Naive thymus-derived CD4-positive, alpha-beta T cell (primary cell): ENCODE measurements at regions of chr2 and their contacts with region 1.

Region 1: GRCh38 chr2:188631037-188631809 is 339.5 kb downstream of the GULP1 start:
- DNase-seq: no peak
- ATAC-seq: no peak
- H3K4me3 ChIP-seq: no peak overlapping the region
- H3K4me3 Mint-ChIP-seq: no peak overlapping the region
- H3K27ac ChIP-seq: no peak overlapping the region
- H3K27ac Mint-ChIP-seq: no peak overlapping the region
- H3K4me1 ChIP-seq: no peaks in the 10 kb centered on the region
- H3K4me1 Mint-ChIP-seq: no peaks in the 10 kb centered on the region
- H3K27me3 ChIP-seq: no peaks in the 10 kb centered on the region
- H3K27me3 Mint-ChIP-seq: no peaks in the 10 kb centered on the region

Region 2: GRCh38 chr2:188620916-188621315 is 10.3 kb before region 1 on chr2:
- CTCF ChIA-PET with region 1: no interaction called
- POLR2A ChIA-PET with region 1: no interaction called
- intact Hi-C with region 1: loop called in 1 of 2 experiments (anchors 2 kb)
- DNase-seq: no peak
- ATAC-seq: no peak
- H3K4me3 ChIP-seq: no peak overlapping the region
- H3K4me3 Mint-ChIP-seq: no peak overlapping the region
- H3K27ac ChIP-seq: no peak overlapping the region
- H3K27ac Mint-ChIP-seq: no peak overlapping the region
- H3K4me1 ChIP-seq: no peaks in the 10 kb centered on the region
- H3K4me1 Mint-ChIP-seq: peaks cover 0 to 2% (median 0%) of the 10 kb centered on the region in 7 donors
- H3K27me3 ChIP-seq: no peaks in the 10 kb centered on the region
- H3K27me3 Mint-ChIP-seq: peaks cover 0 to 4% (median 0%) of the 10 kb centered on the region in 5 donors